ENCODE measurements at regions of chrX and their contacts with region 1.

Region 1: GRCh38 chrX:48917139-48918001 is 1.5 kb downstream of the PIM2 start:
- DNase-seq: peak; percentile 73 to 92 (median 88)
- ATAC-seq: peak; percentile 65
- H3K4me3 ChIP-seq: peak overlapping the region; percentile 75
- H3K4me3 Mint-ChIP-seq: peak overlapping the region; percentile 87 to 99 (median 96)
- H3K27ac ChIP-seq: peak overlapping the region; percentile 95
- H3K27ac Mint-ChIP-seq: peak overlapping the region; percentile 89 to 99 (median 96)
- H3K4me1 ChIP-seq: peaks cover 46 to 49% of the 10 kb centered on the region in 2 donors
- H3K4me1 Mint-ChIP-seq: peaks cover 11 to 82% (median 48%) of the 10 kb centered on the region in 7 donors
- H3K27me3 ChIP-seq: no peaks in the 10 kb centered on the region
- H3K27me3 Mint-ChIP-seq: peaks cover 0 to 5% (median 0%) of the 10 kb centered on the region in 5 donors

Region 2: GRCh38 chrX:48597353-48598264 is 319.8 kb before region 1 on chrX and contains the start of gene WDR13:
- CTCF ChIA-PET with region 1: no interaction called
- POLR2A ChIA-PET with region 1: no interaction called
- intact Hi-C with region 1: loop called in 1 of 2 experiments (anchors 1 kb)
- DNase-seq: peak; percentile 77 to 93 (median 91)
- ATAC-seq: peak; percentile 93
- H3K4me3 ChIP-seq: peak within 1 kb of the TSS; percentile 98
- H3K4me3 Mint-ChIP-seq: peak within 1 kb of the TSS; percentile 81 to 99 (median 96)
- H3K27ac ChIP-seq: peak within 1 kb of the TSS; percentile 94
- H3K27ac Mint-ChIP-seq: peak within 1 kb of the TSS; percentile 98 to 100 (median 99)
- H3K4me1 ChIP-seq: peaks cover 0 to 8% of the 10 kb centered on the region in 2 donors
- H3K4me1 Mint-ChIP-seq: peaks cover 4 to 16% (median 11%) of the 10 kb centered on the region in 7 donors
- H3K27me3 ChIP-seq: no peaks in the 10 kb centered on the region
- H3K27me3 Mint-ChIP-seq: peaks cover 0 to 2% (median 0%) of the 10 kb centered on the region in 5 donors
- total RNA-seq, gene WDR13: 44.8 to 66.9 (median 54.4) TPM

Region 3: DNA sequence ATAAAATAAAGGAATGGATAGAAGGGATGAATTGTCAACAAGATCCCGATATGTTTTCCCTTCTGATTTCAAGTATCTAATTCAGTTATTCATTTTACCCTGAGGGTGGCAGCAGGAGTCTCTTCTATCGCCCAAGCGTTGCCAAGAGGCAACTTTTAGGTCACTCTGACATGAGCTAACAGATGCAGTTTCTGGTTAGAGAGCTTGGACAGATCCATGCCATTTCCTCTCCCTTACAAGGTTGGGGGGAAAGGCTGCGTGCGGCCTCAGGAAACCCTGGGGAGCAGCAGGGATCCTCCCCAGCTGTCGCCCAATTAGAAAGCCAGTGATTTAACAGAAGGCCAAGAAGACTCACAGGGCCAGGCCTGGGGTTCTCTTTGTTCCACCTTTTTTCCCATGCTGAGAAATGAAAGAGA is 269.0 kb before region 1 on chrX:
- CTCF ChIA-PET with region 1: no interaction called
- POLR2A ChIA-PET with region 1: interaction called, 8 read pairs
- intact Hi-C with region 1: loop called (anchors 1 to 2 kb)
- DNase-seq: peak in 8 of 9 donors; percentile 17 to 54 (median 38)
- ATAC-seq: peak; percentile 70
- H3K4me3 ChIP-seq: no peak overlapping the region
- H3K4me3 Mint-ChIP-seq: no peak overlapping the region
- H3K27ac ChIP-seq: no peak overlapping the region
- H3K27ac Mint-ChIP-seq: peak overlapping the region in 3 of 9 donors; percentile 42 to 58 (median 53)
- H3K4me1 ChIP-seq: no peaks in the 10 kb centered on the region
- H3K4me1 Mint-ChIP-seq: peaks cover 0 to 18% (median 13%) of the 10 kb centered on the region in 7 donors
- H3K27me3 ChIP-seq: no peaks in the 10 kb centered on the region
- H3K27me3 Mint-ChIP-seq: no peaks in the 10 kb centered on the region

Region 4: DNA sequence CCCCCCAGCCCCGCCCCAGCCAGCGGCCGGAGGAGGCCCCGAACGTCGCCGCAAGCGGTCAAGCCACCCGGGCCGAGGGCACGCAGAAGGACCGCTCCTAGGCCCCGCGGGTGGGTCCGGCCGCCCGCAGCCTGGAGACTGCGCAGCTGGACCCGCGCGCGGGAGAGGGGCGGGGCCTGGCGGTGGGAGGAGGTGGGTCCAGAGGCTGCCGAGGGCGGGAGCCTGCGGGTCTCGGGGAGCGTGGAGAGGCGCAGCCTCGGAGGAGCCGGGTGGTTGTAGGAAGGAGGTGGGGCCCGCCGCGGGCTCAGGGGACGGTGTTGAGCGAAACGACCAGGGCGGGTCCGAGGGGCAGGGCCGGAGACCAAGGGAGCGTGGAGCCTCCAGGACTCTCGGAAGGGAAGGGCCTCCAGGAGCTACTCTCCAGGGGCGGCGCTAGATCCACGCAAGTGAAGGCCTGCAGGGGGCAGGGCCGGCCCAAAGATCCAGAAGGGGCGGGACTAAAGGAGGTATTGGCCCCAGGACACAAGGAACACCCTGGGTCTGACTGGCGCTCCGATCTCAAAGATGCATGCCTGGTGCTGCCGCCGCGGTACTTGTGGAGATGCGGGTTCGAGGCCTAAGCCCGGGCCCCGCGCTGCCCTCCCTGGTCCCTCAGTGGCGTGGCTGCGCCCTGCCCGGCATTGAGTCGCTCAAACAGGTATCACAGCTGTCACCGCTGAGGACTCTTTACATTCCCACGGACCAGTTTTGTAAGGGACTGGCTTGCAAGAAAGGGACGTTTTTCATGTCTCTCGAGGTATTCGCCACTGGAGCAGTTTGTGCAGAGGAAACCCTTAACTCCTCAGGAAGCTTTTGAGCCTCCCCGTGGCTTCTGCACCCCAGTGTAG is 25.7 kb before region 1 on chrX:
- CTCF ChIA-PET with region 1: interaction called, 6 read pairs
- POLR2A ChIA-PET with region 1: interaction called, 29 read pairs
- intact Hi-C with region 1: loop called in 1 of 2 experiments (anchors 1 kb)
- DNase-seq: peak; percentile 61 to 79 (median 75)
- ATAC-seq: peak; percentile 94
- H3K4me3 ChIP-seq: peak overlapping the region; percentile 53
- H3K4me3 Mint-ChIP-seq: peak overlapping the region; percentile 70 to 98 (median 86)
- H3K27ac ChIP-seq: peak overlapping the region; percentile 81
- H3K27ac Mint-ChIP-seq: peak overlapping the region in 8 of 9 donors; percentile 14 to 82 (median 64)
- H3K4me1 ChIP-seq: peaks cover 7 to 8% of the 10 kb centered on the region in 2 donors
- H3K4me1 Mint-ChIP-seq: peaks cover 12 to 31% (median 20%) of the 10 kb centered on the region in 7 donors
- H3K27me3 ChIP-seq: no peaks in the 10 kb centered on the region
- H3K27me3 Mint-ChIP-seq: no peaks in the 10 kb centered on the region

Region 5: DNA sequence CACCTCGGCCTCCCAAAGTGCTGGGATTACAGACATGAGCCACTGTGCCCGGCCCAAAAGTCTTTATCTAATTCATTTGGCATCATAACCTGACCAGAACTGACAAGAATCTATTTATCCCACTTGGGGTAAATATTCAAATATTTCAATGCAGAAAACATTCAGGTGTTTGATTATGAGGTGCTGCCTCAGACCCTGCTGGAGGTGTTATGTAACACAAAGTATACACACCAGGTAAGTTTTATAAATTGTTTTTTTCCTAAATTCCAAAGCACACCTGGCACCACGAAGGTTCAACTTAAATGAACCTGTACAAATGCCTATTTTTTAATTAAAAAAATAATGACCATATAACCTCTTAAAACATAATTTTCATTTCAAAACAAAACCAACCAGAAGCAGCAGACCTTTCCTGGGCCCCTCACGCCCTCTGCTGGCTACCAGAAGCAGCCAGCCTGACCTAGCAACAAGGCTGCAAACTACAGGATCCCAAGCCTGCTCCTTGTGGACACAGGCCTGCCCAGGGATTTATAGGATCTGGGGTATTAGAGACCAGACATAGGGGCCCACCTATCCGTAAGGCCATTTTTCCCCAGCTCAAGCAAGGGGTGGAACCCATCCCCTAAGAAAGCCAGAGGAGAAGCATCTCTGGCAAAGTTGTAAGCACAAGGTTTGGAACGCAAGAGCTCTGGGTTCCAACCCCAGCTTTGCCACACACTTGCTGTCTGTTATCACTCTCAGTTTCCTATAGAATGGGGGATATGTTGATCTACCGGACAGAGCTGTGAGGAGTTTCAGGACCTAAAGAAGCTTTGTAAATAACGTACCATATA is 28.4 kb after region 1 on chrX:
- CTCF ChIA-PET with region 1: interaction called, 6 read pairs
- POLR2A ChIA-PET with region 1: interaction called, 432 read pairs
- intact Hi-C with region 1: loop called (anchors 1 kb)
- DNase-seq: peak; percentile 30 to 69 (median 46)
- ATAC-seq: peak; percentile 74
- H3K4me3 ChIP-seq: no peak overlapping the region
- H3K4me3 Mint-ChIP-seq: peak overlapping the region; percentile 25 to 61 (median 50)
- H3K27ac ChIP-seq: peak overlapping the region; percentile 22
- H3K27ac Mint-ChIP-seq: peak overlapping the region; percentile 44 to 88 (median 71)
- H3K4me1 ChIP-seq: peaks cover 23 to 25% of the 10 kb centered on the region in 2 donors
- H3K4me1 Mint-ChIP-seq: peaks cover 20 to 59% (median 48%) of the 10 kb centered on the region in 7 donors
- H3K27me3 ChIP-seq: no peaks in the 10 kb centered on the region
- H3K27me3 Mint-ChIP-seq: no peaks in the 10 kb centered on the region